Activated T-helper 1 cell treated with anti-CD3 and anti-CD28 coated beads, Interleukin-12 subunit alpha, Interleukin-12 subunit beta, Interleukin-2, Interleukin-4 antibody, amounts not matched to agents 30 ng/mL and 10 ng/mL and 1 ng/mL, durations not matched to agents 14 hours and 24 hours and 36 hours (primary cell): ENCODE measurements at regions of chr5 and their contacts with region 1.

Region 1: GRCh38 chr5:113513384-113514288 is at the start of gene YTHDC2:
- DNase-seq: peak; percentile 82
- H3K4me3 Mint-ChIP-seq: peak within 1 kb of the TSS; percentile 94
- H3K27ac Mint-ChIP-seq: peak within 1 kb of the TSS; percentile 87
- H3K4me1 Mint-ChIP-seq: peaks cover 35% of the 10 kb centered on the region
- H3K27me3 Mint-ChIP-seq: peaks cover 9% of the 10 kb centered on the region
- total RNA-seq, gene YTHDC2: 26.0 and 27.5 TPM in 2 replicates

Region 2: GRCh38 chr5:112860929-112861637 is 652.6 kb before region 1 on chr5 and contains the start of gene SRP19:
- intact Hi-C with region 1: loop called (anchors 5 kb)
- DNase-seq: peak; percentile 89
- H3K4me3 Mint-ChIP-seq: peak within 1 kb of the TSS; percentile 97
- H3K27ac Mint-ChIP-seq: peak within 1 kb of the TSS; percentile 96
- H3K4me1 Mint-ChIP-seq: peaks cover 27% of the 10 kb centered on the region
- H3K27me3 Mint-ChIP-seq: peaks cover 12% of the 10 kb centered on the region
- total RNA-seq, gene SRP19: 72.0 and 72.5 TPM in 2 replicates

Region 3: GRCh38 chr5:112995764-112996618 is 517.6 kb before region 1 on chr5:
- intact Hi-C with region 1: loop called (anchors 1 kb)
- DNase-seq: peak; percentile 61
- H3K4me3 Mint-ChIP-seq: no peak overlapping the region
- H3K27ac Mint-ChIP-seq: no peak overlapping the region
- H3K4me1 Mint-ChIP-seq: peaks cover 23% of the 10 kb centered on the region
- H3K27me3 Mint-ChIP-seq: no peaks in the 10 kb centered on the region

Region 4: DNA sequence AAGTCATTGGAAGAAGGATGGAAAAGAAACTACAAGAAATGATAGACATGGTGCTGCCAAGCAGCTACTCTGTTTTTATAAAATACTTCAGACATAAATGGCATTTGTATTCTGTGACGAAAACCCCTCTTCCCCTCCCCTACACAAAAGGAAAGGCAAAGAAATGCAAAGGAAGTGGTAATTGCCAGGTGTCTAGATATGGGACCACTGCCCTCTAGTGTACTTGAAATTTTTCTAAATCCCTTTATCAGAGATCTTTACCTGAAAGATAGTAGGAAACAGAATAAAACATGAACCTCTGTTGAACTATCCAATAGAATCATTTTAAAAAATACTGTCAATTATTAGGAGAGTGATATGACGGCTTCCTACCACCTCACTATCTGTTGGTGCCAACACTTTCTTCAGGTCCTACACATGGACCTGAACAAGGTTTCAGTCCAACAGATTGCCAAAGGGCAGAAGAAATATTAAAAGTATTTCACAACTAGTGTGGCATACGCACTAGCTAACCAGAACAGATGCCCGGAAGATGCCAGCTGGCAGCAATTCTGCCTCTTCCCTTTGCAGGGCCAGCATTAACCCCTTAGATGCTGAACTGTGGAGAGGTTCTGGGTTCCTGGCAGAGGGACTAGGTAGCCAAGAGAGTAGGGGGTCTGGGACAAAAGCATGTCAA is 183.0 kb before region 1 on chr5:
- intact Hi-C with region 1: loop called (anchors 2 kb)
- DNase-seq: no peak
- H3K4me3 Mint-ChIP-seq: no peak overlapping the region
- H3K27ac Mint-ChIP-seq: no peak overlapping the region
- H3K4me1 Mint-ChIP-seq: peaks cover 14% of the 10 kb centered on the region
- H3K27me3 Mint-ChIP-seq: peaks cover 6% of the 10 kb centered on the region

Region 5: DNA sequence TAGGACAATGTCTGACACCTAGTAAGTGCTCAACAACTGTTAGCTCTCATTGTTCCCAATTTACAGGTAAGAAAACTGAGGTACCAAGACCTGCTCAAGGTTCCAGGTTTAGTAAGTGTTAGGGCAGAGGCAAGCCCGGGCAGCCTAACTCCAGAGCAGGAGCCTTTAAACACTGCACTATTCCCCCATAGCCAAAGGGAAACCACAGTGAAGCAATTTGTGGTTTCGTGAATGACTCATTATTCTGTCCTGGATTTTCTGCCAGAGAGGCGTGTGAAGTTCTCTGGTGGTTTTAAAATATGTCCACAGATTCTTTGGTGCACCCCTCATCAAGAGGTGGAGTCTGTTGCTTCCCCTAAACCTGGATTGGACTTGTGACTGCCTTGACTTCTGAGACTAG is 24.3 kb before region 1 on chr5:
- intact Hi-C with region 1: loop called (anchors 1 kb)
- DNase-seq: peak; percentile 10
- H3K4me3 Mint-ChIP-seq: peak overlapping the region; percentile 76
- H3K27ac Mint-ChIP-seq: no peak overlapping the region
- H3K4me1 Mint-ChIP-seq: peaks cover 26% of the 10 kb centered on the region
- H3K27me3 Mint-ChIP-seq: peaks cover 74% of the 10 kb centered on the region

Region 6: GRCh38 chr5:113950186-113950585 is 436.6 kb after region 1 on chr5:
- intact Hi-C with region 1: no loop called
- DNase-seq: no peak
- H3K4me3 Mint-ChIP-seq: no peak overlapping the region
- H3K27ac Mint-ChIP-seq: no peak overlapping the region
- H3K4me1 Mint-ChIP-seq: no peaks in the 10 kb centered on the region
- H3K27me3 Mint-ChIP-seq: no peaks in the 10 kb centered on the region

Region 7: GRCh38 chr5:114201332-114201731 is 687.7 kb after region 1 on chr5:
- intact Hi-C with region 1: no loop called
- DNase-seq: no peak
- H3K4me3 Mint-ChIP-seq: no peak overlapping the region
- H3K27ac Mint-ChIP-seq: no peak overlapping the region
- H3K4me1 Mint-ChIP-seq: no peaks in the 10 kb centered on the region
- H3K27me3 Mint-ChIP-seq: no peaks in the 10 kb centered on the region